Posterior cingulate gyrus (tissue), 11 donors: ENCODE measurements at regions of chr19 and their contacts with region 1.

Region 1: GRCh38 chr19:14686411-14686810 is 3.4 kb upstream of the ZNF333 start:
- DNase-seq: no peak

Region 2: GRCh38 chr19:14571695-14572490 is 114.5 kb before region 1 on chr19 and contains the start of gene NDUFB7:
- intact Hi-C with region 1: loop called (anchors 1 kb)
- DNase-seq: peak; percentile 91 to 99 (median 93)

Region 3: DNA sequence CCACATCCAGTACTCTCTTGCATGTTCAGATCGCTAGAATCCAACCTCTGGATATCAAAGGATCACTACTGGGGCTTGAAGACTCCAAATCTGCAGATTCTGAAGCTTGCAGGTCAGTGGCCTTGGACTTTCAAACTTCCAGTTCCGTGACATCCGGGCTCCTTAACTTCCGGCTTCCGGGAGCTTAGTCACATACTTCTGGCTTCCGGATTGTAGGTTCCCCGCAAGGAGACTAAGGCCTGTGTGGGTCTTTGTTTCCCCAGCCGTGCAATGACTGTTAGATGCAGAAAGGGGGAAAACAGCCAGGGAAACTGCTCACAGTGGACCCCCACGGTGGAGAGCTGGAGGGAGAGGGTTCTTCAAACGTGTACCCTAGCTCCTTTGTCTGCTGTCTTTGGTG is 44.8 kb after region 1 on chr19:
- intact Hi-C with region 1: no loop called
- DNase-seq: no peak